ENCODE measurements at regions of chr20 and their contacts with region 1.

Region 1: GRCh38 chr20:46520976-46521579 is 7.7 kb upstream of the ZNF334 start:
- DNase-seq: peak; percentile 63 to 89 (median 78)
- H3K4me3 ChIP-seq: no peak overlapping the region
- H3K27ac ChIP-seq: no peak overlapping the region
- H3K4me1 ChIP-seq: no peaks in the 10 kb centered on the region
- H3K27me3 ChIP-seq: peaks cover 10% of the 10 kb centered on the region
- CTCF ChIP-seq: peak; percentile 52 to 91 (median 78)
- POLR2A ChIP-seq: no peak

Region 2: GRCh38 chr20:46681032-46681854 is 160.2 kb after region 1 on chr20:
- intact Hi-C with region 1: loop called in 1 of 2 experiments (anchors 5 kb)
- DNase-seq: peak; percentile 48 to 93 (median 74)
- H3K4me3 ChIP-seq: no peak overlapping the region
- H3K27ac ChIP-seq: no peak overlapping the region
- H3K4me1 ChIP-seq: peaks cover 0 to 14% of the 10 kb centered on the region in 2 donors
- H3K27me3 ChIP-seq: no peaks in the 10 kb centered on the region
- CTCF ChIP-seq: peak; percentile 77 to 98 (median 84)
- POLR2A ChIP-seq: no peak

Measured in adrenal gland (tissue), 19 donors.